ENCODE measurements at regions of chr3 and their contacts with region 1.

Region 1: GRCh38 chr3:14402304-14402811 is at the start of gene SLC6A6:
- DNase-seq: peak; percentile 93 to 96 (median 95)
- H3K4me3 ChIP-seq: peak within 1 kb of the TSS; percentile 62 to 100
- H3K4me3 Mint-ChIP-seq: peak within 1 kb of the TSS; percentile 96 to 100 (median 97)
- H3K27ac ChIP-seq: peak within 1 kb of the TSS; percentile 83
- H3K27ac Mint-ChIP-seq: peak within 1 kb of the TSS; percentile 96 to 100 (median 98)
- H3K4me1 ChIP-seq: peaks cover 51% of the 10 kb centered on the region
- H3K4me1 Mint-ChIP-seq: peaks cover 31 to 70% (median 45%) of the 10 kb centered on the region in 4 donors
- H3K27me3 ChIP-seq: no peaks in the 10 kb centered on the region
- H3K27me3 Mint-ChIP-seq: no peaks in the 10 kb centered on the region
- total RNA-seq, gene SLC6A6: 50.6 to 51.8 TPM

Region 2: GRCh38 chr3:14261229-14261628 is 141.1 kb before region 1 on chr3:
- CTCF ChIA-PET with region 1: interaction called, 7 read pairs
- POLR2A ChIA-PET with region 1: no interaction called
- intact Hi-C with region 1: loop called (anchors 1 kb)
- DNase-seq: peak; percentile 54 to 65 (median 64)
- H3K4me3 ChIP-seq: no peak overlapping the region
- H3K4me3 Mint-ChIP-seq: no peak overlapping the region
- H3K27ac ChIP-seq: no peak overlapping the region
- H3K27ac Mint-ChIP-seq: no peak overlapping the region
- H3K4me1 ChIP-seq: no peaks in the 10 kb centered on the region
- H3K4me1 Mint-ChIP-seq: peaks cover 0 to 2% (median under 1%) of the 10 kb centered on the region in 4 donors
- H3K27me3 ChIP-seq: no peaks in the 10 kb centered on the region
- H3K27me3 Mint-ChIP-seq: peaks cover 0 to 6% of the 10 kb centered on the region in 2 donors

Region 3: DNA sequence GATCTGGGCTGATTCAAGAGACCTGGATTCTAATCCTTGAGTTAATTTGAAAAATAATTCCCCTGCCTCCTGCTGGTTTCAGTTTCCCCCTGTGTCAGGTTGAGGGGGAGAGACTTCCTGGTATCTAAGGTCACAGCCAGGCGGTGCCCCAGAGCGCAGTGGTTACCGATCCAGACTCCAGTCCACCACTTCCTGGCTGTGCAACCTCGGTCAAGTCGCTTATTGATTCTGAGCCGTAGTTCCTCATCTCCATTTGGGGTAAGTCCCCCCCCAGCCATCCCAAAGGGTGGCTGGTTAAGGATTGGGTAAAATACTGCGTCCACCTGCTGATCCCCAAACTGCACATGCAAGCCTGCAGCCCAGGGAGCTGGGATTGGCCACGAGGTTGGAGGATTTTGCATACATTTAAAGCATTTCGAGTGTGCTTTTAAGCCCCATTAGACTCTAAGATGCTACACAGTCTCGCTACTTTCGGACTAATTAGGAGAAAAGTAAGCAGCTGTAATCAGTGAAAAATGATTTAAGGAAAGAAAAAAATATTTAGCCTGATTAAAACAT is 23.8 kb after region 1 on chr3:
- CTCF ChIA-PET with region 1: interaction called, 52 read pairs
- POLR2A ChIA-PET with region 1: interaction called, 394 read pairs
- intact Hi-C with region 1: loop called (anchors 1 kb)
- DNase-seq: peak; percentile 51 to 79 (median 62)
- H3K4me3 ChIP-seq: peak overlapping the region in 1 of 2 donors; percentile 4
- H3K4me3 Mint-ChIP-seq: peak overlapping the region; percentile 65 to 91 (median 80)
- H3K27ac ChIP-seq: peak overlapping the region; percentile 98
- H3K27ac Mint-ChIP-seq: peak overlapping the region; percentile 97 to 100 (median 100)
- H3K4me1 ChIP-seq: peaks cover 93% of the 10 kb centered on the region
- H3K4me1 Mint-ChIP-seq: peaks cover 75 to 98% (median 90%) of the 10 kb centered on the region in 4 donors
- H3K27me3 ChIP-seq: no peaks in the 10 kb centered on the region
- H3K27me3 Mint-ChIP-seq: no peaks in the 10 kb centered on the region

Region 4: GRCh38 chr3:14461748-14462324 is 59.5 kb after region 1 on chr3:
- CTCF ChIA-PET with region 1: interaction called, 124 read pairs
- POLR2A ChIA-PET with region 1: interaction called, 10 read pairs
- intact Hi-C with region 1: loop called (anchors 1 kb)
- DNase-seq: peak in 4 of 5 donors; percentile 30 to 38 (median 32)
- H3K4me3 ChIP-seq: no peak overlapping the region
- H3K4me3 Mint-ChIP-seq: no peak overlapping the region
- H3K27ac ChIP-seq: no peak overlapping the region
- H3K27ac Mint-ChIP-seq: peak overlapping the region in 3 of 7 donors; percentile 23 to 73 (median 41)
- H3K4me1 ChIP-seq: no peaks in the 10 kb centered on the region
- H3K4me1 Mint-ChIP-seq: peaks cover 0 to 5% (median 3%) of the 10 kb centered on the region in 4 donors
- H3K27me3 ChIP-seq: no peaks in the 10 kb centered on the region
- H3K27me3 Mint-ChIP-seq: no peaks in the 10 kb centered on the region

Region 5: DNA sequence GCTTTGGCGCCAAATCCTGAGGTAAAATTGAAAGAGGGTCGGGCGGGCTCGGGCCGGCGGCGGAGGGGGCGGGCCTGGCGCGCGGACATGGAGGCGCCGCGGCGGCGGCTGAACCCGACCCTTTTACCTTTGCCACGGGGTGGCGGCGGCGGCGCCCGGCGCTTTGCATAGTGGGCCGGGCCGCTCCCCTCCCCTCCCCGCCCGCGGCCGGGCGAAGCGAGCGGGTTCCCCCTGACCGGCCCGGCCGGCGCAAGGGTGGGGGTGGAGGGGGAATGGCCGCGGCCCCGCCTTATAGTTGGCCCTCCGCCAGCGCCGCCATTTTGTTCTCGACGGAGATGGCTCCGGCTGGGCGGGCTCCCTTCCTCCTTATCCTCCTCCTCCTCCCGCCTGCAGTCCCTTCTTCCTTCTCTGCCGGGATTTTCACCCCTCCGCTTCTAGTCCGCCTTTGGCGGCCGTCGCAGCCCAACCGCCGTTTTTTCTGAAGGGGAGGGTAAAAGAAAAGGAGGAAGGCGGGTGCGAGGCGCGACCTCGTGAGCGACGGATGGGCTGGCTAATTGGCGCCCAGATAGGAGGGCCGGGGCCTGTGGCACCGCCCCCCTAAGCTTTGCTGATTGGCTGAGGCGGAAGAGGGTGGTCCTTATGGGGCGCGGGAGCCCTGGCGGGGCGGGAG is 545.7 kb after region 1 on chr3:
- CTCF ChIA-PET with region 1: no interaction called
- POLR2A ChIA-PET with region 1: no interaction called
- intact Hi-C with region 1: loop called (anchors 1 kb)
- DNase-seq: peak; percentile 95 to 99 (median 96)
- H3K4me3 ChIP-seq: peak overlapping the region; percentile 63 to 83
- H3K4me3 Mint-ChIP-seq: peak overlapping the region; percentile 98 to 100 (median 100)
- H3K27ac ChIP-seq: peak overlapping the region; percentile 97
- H3K27ac Mint-ChIP-seq: peak overlapping the region; percentile 99 to 100 (median 100)
- H3K4me1 ChIP-seq: peaks cover 44% of the 10 kb centered on the region
- H3K4me1 Mint-ChIP-seq: peaks cover 27 to 71% (median 48%) of the 10 kb centered on the region in 4 donors
- H3K27me3 ChIP-seq: no peaks in the 10 kb centered on the region
- H3K27me3 Mint-ChIP-seq: no peaks in the 10 kb centered on the region

Measured in CD4-positive, alpha-beta memory T cell (primary cell).